ENCODE measurements at regions of chr6 and their contacts with region 1.

Region 1: DNA sequence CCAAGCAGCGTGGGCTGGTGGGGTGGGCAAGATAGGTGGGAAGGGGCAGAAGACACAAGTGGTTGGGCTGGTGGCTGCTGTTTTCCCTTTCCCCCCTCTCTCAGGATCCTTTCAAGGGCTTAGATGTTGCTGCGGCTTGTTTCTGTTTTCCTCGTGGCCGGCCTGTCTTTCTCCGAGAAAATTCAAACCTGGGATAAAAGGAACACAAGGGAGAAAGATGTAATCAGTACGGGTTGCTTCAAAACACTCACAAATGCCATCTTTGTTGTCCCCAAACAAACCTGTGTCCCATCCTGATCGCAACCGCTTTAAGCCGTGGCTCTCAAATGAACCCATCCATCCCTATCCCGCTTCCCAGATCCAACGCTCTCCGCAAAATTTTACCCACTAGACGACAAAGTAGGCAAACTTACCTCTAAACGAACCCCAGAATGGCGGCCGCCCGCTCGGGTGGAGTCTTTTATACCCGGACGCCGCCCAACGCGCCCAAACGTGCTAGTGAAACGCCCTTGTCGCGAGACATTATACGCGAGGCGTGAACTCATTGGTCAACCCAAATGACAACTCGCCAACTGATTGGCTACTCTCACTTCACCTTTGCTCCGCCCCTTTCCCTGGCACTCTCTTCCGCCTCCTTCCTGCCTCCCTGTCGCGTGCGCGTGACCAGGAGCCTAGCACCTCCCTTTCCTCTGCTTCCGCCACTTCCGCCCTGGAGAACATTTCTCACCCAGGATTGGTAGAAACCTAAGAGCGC is at the start of gene PPP1R10:
- DNase-seq: peak; percentile 99
- H3K4me3 Mint-ChIP-seq: peak within 1 kb of the TSS; percentile 91
- H3K27ac Mint-ChIP-seq: peak within 1 kb of the TSS; percentile 98
- H3K4me1 Mint-ChIP-seq: peaks cover 43% of the 10 kb centered on the region
- H3K27me3 Mint-ChIP-seq: peaks cover 6% of the 10 kb centered on the region
- total RNA-seq, gene PPP1R10: 124 and 126 TPM in 2 replicates

Region 2: GRCh38 chr6:29953001-29953441 is 664.0 kb before region 1 on chr6:
- intact Hi-C with region 1: no loop called
- DNase-seq: no peak
- H3K4me3 Mint-ChIP-seq: no peak overlapping the region
- H3K27ac Mint-ChIP-seq: no peak overlapping the region
- H3K4me1 Mint-ChIP-seq: peaks cover 4% of the 10 kb centered on the region
- H3K27me3 Mint-ChIP-seq: peaks cover 2% of the 10 kb centered on the region

Region 3: DNA sequence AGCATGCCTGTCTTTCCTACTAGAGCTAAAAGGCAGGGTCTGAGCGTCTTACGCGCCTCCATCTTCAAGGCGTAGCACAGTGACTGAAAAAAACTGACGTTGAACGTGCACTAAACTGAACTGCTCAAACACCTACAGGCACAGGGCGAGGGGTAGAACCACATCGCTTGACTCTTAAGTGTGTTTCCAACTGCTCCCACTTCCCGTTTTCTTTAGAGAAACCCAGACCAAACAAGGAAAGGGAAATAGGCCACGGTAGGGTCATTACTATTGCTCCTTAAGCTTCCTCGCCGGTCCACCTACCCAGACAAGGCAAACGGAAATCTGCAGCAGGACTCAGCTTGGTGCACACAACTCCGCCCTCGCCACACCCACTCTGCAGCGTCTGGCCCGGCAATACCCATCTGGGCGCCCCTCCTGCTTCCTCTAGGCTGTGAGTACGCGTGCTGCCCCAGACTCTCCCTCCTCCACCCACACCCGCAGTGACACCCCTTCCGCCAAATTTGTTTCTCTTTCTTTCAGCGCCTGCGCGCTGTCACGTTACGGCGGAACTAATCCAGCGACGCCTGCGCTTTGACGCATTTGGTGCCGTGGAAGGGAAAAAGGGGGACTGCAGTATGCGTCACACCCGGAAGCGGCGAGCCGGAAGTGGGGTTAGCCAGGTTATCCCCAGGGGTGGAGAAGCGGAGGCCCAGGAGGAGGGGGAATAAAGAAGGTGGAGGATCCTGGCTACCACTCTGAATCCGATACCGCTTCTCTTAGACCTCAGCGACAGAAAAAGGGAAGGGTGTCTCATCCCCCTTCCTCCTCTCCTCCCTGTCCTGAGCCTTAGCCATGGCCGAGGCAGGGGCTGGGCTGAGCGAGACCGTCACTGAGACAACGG is 550.2 kb before region 1 on chr6 and contains the start of gene PPP1R11:
- intact Hi-C with region 1: loop called (anchors 10 kb)
- DNase-seq: peak; percentile 99
- H3K4me3 Mint-ChIP-seq: peak within 1 kb of the TSS; percentile 97
- H3K27ac Mint-ChIP-seq: peak within 1 kb of the TSS; percentile 99
- H3K4me1 Mint-ChIP-seq: peaks cover 50% of the 10 kb centered on the region
- H3K27me3 Mint-ChIP-seq: peaks cover 11% of the 10 kb centered on the region
- total RNA-seq, gene PPP1R11: 69.8 and 71.0 TPM in 2 replicates

Region 4: DNA sequence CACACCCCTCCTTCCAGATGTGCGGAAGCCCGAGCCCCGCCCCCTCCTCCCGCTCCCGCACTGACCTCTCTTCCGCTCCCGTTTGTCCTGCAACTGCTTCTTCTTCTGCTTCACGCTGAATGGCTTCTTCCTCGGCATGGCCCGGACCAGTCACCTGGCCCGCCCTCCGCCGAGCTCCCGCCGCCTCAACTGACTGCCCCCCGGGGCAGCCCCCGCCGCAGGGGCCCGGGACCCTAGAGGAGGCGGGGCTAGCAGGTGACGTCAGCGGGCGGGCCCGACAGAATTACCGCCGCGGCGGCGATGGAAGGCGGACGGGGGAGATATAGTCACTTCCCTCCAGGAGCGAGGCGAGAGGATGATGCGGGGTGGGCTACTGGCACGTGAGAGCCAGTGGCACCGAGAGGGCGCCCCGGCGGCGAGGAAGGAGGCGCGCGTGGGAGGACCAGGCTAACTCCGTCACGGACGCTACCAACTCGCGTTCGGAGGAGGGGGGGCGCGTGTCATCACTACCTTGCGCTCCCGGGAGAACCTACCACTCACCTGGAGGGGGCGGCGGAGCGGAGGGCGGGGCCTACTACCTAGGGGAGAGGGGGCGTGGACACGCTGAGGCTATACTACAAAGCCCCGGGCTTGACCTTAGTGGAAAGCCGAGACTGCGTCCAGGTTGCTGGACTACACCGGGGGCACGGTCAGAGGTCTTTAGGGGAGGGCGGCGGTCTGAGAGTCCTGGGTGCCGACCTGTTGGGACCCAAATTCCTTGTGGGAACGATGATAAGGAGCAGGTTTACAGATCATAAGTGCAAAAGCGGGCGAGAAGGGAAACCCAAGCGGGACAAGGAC is 60.7 kb before region 1 on chr6 and contains the start of gene GNL1:
- intact Hi-C with region 1: loop called (anchors 1 kb)
- DNase-seq: peak; percentile 96
- H3K4me3 Mint-ChIP-seq: peak within 1 kb of the TSS; percentile 96
- H3K27ac Mint-ChIP-seq: peak within 1 kb of the TSS; percentile 99
- H3K4me1 Mint-ChIP-seq: peaks cover 36% of the 10 kb centered on the region
- H3K27me3 Mint-ChIP-seq: no peaks in the 10 kb centered on the region
- total RNA-seq, gene GNL1: 86.3 and 92.4 TPM in 2 replicates

Region 5: GRCh38 chr6:30640476-30640875 is 23.5 kb after region 1 on chr6:
- intact Hi-C with region 1: no loop called
- DNase-seq: no peak
- H3K4me3 Mint-ChIP-seq: no peak overlapping the region
- H3K27ac Mint-ChIP-seq: no peak overlapping the region
- H3K4me1 Mint-ChIP-seq: peaks cover 25% of the 10 kb centered on the region
- H3K27me3 Mint-ChIP-seq: no peaks in the 10 kb centered on the region

Region 6: DNA sequence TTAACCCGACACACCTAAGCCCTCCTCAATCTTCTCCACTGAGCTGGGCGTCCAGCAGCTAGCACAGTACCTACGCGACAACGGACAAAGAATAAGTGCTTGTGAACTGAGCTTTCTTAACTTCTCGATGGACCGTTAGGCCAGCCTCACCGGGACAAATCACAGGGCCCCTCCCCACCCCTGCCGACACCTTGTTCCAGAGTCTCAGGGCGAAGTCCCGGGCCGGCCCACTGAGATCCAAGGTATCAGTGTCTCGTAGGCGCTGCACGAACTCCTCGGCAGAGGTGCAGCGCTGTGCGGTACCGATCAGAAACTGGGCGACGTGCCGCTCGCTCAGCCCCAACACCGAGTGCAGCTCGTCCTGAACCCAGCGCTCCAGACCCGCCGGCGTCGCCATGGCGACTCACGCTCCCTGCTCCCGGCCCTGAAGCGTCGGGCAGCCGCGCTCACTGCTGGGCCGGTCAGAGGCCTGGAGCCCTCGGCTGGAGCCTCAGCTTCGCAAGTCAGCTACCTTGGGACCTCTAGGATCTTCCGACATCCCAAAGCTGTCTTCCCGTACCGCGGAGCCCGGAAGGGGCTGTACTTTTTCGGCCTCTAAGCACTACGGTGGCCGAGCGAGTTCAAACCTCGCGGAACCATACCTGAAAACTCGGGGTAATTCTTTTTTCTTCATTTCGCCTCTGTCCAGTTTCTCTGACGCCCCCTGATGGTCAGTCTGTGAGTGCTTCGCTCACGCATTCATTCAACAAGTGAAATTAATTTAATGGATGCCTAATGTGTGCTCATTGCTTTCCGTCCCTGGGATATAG is 55.7 kb after region 1 on chr6 and contains the start of gene DHX16:
- intact Hi-C with region 1: loop called (anchors 2 kb)
- DNase-seq: peak; percentile 85
- H3K4me3 Mint-ChIP-seq: peak within 1 kb of the TSS; percentile 87
- H3K27ac Mint-ChIP-seq: peak within 1 kb of the TSS; percentile 76
- H3K4me1 Mint-ChIP-seq: peaks cover 28% of the 10 kb centered on the region
- H3K27me3 Mint-ChIP-seq: no peaks in the 10 kb centered on the region
- total RNA-seq, gene DHX16: 52.0 and 54.2 TPM in 2 replicates

Region 7: DNA sequence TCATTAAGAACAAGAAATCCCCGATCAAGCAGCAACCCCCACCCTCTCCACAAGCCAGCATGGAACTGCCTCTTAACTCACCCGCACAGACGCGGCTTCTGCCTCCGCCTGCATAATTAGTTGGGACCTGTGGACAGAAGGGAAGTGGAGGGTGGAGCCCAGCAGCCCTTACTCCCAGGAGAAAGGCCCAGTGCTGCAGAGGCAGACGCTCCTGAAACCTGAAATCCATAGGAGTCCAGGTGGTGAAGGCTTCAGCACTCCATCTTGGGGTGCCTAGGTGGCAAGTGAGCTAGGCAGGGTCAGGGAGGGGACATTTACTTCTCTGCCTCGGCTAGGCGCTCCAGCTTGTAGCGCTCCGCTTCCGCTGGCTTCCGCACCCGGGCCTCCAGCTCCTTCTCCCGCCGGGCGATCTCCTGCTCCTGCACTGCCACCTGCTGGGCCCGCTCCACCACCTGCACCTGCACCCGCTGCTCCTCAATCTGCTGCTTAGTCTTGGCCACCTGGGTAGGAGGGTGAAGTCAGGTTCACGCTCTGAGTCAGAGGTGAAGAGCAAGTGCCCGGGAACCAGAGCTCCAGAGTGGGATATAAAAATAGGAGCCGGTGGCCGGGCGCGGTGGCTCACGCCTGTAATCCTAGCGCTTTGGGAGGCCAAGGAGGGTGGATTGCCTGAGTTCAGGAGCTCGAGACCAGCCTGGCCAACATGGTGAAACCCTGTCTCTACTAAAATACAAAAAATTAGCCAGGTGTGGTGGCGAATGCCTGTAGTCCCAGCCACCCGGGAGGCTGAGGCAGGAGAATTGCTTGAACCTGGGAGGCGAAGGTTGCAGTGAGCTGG is 113.8 kb after region 1 on chr6:
- intact Hi-C with region 1: loop called (anchors 5 kb)
- DNase-seq: peak; percentile 79
- H3K4me3 Mint-ChIP-seq: peak overlapping the region; percentile 19
- H3K27ac Mint-ChIP-seq: peak overlapping the region; percentile 55
- H3K4me1 Mint-ChIP-seq: peaks cover 51% of the 10 kb centered on the region
- H3K27me3 Mint-ChIP-seq: no peaks in the 10 kb centered on the region

Region 8: DNA sequence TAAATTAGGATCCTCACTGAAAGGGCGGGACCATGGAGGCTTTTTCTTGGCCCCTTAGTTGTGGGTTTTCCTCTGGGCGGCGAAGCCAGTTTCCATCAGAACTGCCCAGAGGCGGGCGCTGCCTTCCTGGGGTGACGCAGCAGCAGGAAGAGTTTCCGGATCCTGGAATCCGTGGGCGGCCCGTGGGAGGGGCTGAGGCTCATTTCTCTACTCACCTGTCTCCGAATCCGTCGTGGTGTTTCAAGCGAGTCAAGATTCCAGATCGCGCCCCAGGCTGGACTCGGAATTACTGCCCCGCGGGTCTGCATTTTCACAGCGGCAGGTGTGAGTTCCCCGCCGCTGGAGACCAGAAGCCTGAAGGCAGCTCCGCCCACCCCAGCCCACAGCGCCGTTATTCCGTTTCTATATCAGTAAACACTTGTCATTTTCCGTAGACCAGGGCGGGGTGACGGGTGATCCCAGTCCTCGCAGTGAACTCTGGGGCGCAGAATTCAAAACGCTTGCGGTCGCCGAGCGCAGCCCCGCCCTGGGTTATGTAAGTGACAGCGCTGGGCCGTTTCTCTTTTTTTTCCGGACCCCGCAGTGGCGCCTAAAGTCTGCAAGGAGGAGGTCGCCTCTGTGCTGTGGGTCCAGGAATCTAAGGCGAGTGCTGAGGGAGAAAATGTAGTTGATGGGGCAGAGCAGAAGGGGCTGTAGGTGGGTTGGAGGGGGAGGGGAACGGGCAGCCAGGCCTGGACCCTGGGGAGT is 580.7 kb after region 1 on chr6:
- intact Hi-C with region 1: loop called (anchors 2 kb)
- DNase-seq: peak; percentile 92
- H3K4me3 Mint-ChIP-seq: peak overlapping the region; percentile 98
- H3K27ac Mint-ChIP-seq: peak overlapping the region; percentile 99
- H3K4me1 Mint-ChIP-seq: peaks cover 53% of the 10 kb centered on the region
- H3K27me3 Mint-ChIP-seq: no peaks in the 10 kb centered on the region